Heart right ventricle (tissue), 16 donors: ENCODE measurements at regions of chr9 and their contacts with region 1.

Region 1: GRCh38 chr9:122810306-122810946 is 10.5 kb downstream of the OR1K1 start:
- DNase-seq: peak; percentile 66 to 70
- ATAC-seq: peak; percentile 77 to 91 (median 87)
- H3K4me3 ChIP-seq: no peak overlapping the region
- H3K27ac ChIP-seq: no peak overlapping the region
- H3K4me1 ChIP-seq: peaks cover 0 to 7% (median 0%) of the 10 kb centered on the region in 9 donors
- H3K27me3 ChIP-seq: no peaks in the 10 kb centered on the region
- CTCF ChIP-seq: peak; percentile 65 to 86 (median 78)

Region 2: GRCh38 chr9:122099271-122099869 is 711.1 kb before region 1 on chr9:
- intact Hi-C with region 1: loop called in 6 of 10 experiments (anchors 5 to 10 kb)
- DNase-seq: peak; percentile 79 to 85
- ATAC-seq: peak; percentile 54 to 91 (median 87)
- H3K4me3 ChIP-seq: peak overlapping the region in 2 of 10 donors; percentile 10 to 23
- H3K27ac ChIP-seq: no peak overlapping the region
- H3K4me1 ChIP-seq: peaks cover 0 to 12% (median 3%) of the 10 kb centered on the region in 9 donors
- H3K27me3 ChIP-seq: no peaks in the 10 kb centered on the region
- CTCF ChIP-seq: peak; percentile 81 to 93 (median 87)

Region 3: GRCh38 chr9:122125158-122125508 is 685.3 kb before region 1 on chr9:
- intact Hi-C with region 1: loop called in 3 of 10 experiments (anchors 10 kb)
- DNase-seq: peak; percentile 79 to 85
- ATAC-seq: peak; percentile 78 to 91 (median 84)
- H3K4me3 ChIP-seq: no peak overlapping the region
- H3K27ac ChIP-seq: no peak overlapping the region
- H3K4me1 ChIP-seq: peaks cover 12 to 47% (median 30%) of the 10 kb centered on the region in 9 donors
- H3K27me3 ChIP-seq: peaks cover 0 to 32% (median 3%) of the 10 kb centered on the region in 7 donors
- CTCF ChIP-seq: peak in 8 of 9 donors; percentile 90 to 98 (median 96)

Region 4: GRCh38 chr9:122360891-122361290 is 449.5 kb before region 1 on chr9:
- intact Hi-C with region 1: loop called in 2 of 10 experiments (anchors 10 kb)
- DNase-seq: no peak
- ATAC-seq: no peak
- H3K4me3 ChIP-seq: no peak overlapping the region
- H3K27ac ChIP-seq: no peak overlapping the region
- H3K4me1 ChIP-seq: peaks cover 0 to 8% (median 0%) of the 10 kb centered on the region in 9 donors
- H3K27me3 ChIP-seq: peaks cover 0 to 5% (median 0%) of the 10 kb centered on the region in 7 donors
- CTCF ChIP-seq: no peak

Region 5: DNA sequence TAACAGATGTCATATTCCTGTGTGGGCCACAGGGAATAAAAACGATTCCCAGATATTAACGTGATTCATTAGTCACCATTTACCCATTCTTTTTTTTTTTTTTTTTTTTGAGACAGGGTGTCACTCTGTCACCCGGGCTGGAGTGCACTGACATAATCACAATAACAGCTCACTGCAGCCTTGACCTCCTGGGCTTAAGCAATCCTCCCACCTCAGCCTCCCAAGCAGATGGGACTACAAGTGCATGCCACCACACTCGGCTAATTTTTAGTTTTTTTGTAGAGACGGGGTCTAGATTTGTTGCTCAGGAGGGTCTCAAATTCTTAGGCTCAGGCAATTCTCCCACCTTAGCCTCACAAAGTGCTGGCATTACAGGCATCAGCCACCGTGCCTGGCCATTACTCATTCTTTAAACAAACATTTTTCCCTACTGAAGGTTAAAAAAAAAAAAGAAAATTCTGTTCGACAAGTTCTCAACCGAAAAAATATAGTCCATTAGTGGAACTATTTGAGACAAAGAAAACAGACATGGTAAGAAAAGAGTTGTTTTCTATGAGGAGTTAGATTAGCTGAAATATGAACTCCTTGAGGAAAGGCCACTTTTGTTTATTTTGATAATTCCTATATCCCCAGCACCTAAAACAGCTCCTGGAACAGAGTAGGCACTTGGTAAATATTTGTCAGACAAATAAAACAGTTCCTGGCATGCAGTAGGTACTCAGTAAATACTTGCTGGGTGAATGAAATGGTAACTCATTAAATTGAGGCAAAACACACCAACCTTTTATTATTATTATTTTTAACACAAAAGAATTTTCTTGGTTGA is 50.1 kb after region 1 on chr9:
- intact Hi-C with region 1: loop called in 1 of 10 experiments (anchors 10 kb)
- DNase-seq: no peak
- ATAC-seq: no peak
- H3K4me3 ChIP-seq: no peak overlapping the region
- H3K27ac ChIP-seq: no peak overlapping the region
- H3K4me1 ChIP-seq: peaks cover 0 to 13% (median 0%) of the 10 kb centered on the region in 9 donors
- H3K27me3 ChIP-seq: no peaks in the 10 kb centered on the region
- CTCF ChIP-seq: no peak